Lower leg skin (tissue), 4 donors: ENCODE measurements at regions of chr1 and their contacts with region 1.

Region 1: GRCh38 chr1:91997607-91998195 is 32.1 kb upstream of the EPHX4 start:
- DNase-seq: no peak
- H3K4me3 ChIP-seq: no peak overlapping the region
- CTCF ChIP-seq: no peak
- POLR2A ChIP-seq: no peak

Region 2: GRCh38 chr1:91968334-91968733 is 29.4 kb before region 1 on chr1:
- intact Hi-C with region 1: loop called (anchors 1 kb)
- DNase-seq: no peak
- H3K4me3 ChIP-seq: no peak overlapping the region
- CTCF ChIP-seq: no peak
- POLR2A ChIP-seq: no peak

Region 3: GRCh38 chr1:92108631-92109030 is 110.9 kb after region 1 on chr1:
- intact Hi-C with region 1: no loop called
- DNase-seq: no peak
- H3K4me3 ChIP-seq: no peak overlapping the region
- CTCF ChIP-seq: no peak
- POLR2A ChIP-seq: no peak

Region 4: DNA sequence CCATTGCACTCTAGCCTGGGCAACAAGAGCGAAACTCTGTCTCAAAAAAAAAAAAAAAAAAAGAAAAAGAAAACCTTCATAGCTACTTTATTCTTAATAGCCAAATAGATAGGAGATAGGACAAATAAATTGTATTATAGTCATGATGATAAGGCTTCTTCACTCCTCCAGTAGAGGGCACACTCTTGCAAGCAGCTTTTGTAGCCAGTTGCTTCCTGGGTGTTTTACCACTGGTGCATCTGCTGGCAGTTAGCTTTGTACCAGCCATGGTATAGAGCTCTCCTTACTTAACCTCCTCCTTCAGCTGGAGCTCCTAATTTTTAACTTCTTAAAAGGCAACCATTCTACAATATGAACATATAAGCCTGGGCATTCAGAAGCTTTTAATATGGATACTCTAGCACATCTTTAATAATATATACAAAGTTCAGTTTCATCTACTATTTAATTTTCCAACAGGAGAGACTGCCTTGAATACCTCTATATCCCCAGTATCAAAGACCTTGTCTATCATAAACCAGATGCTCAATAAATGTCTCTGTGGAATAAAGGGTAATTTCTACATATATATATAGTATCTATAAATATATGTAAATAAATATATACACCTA is 751.4 kb after region 1 on chr1:
- intact Hi-C with region 1: no loop called
- DNase-seq: peak in 1 of 2 donors; percentile 20
- H3K4me3 ChIP-seq: no peak overlapping the region
- CTCF ChIP-seq: no peak
- POLR2A ChIP-seq: no peak